Activated CD8-positive, alpha-beta T cell treated with anti-CD3 and anti-CD28 coated beads for 36 hours (primary cell): ENCODE measurements at regions of chr2 and their contacts with region 1.

Region 1: DNA sequence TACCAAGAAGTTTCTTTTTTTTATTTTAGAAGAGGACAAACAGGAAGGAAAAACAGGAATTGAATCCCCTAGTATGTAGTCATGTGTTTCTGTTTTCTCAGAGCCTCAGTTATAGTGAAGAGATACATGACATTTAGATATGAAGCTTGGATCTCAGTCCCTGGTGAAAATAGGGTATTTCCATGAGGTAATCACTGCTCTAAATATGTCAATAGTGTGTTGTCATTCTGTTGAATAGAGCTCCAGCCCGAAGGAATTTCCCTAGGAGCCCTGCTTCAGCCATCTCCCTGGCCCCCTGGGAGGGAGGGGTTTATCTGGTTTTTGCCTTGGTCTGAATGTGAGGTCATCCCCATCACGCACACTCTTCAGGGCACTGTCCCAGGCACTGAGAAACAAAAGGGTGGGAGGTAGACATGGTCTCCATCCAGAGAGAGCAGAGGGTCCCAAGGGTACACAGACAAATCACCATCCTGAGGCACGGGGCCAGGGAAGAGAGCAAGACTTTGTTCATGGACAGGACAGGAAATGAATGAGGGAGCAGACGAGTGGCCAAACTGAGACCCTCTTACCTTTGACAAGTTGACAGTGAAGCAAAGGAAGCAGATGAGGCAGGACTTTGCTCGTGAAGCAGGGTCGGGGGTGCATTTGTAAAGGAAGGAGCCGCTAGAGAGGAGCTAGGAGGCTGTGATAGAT is 47.0 kb upstream of the REL start:
- DNase-seq: no peak
- ATAC-seq: peak; percentile 27
- H3K4me3 Mint-ChIP-seq: no peak overlapping the region
- H3K27ac Mint-ChIP-seq: peak overlapping the region; percentile 36
- H3K4me1 Mint-ChIP-seq: peaks cover 43% of the 10 kb centered on the region
- H3K27me3 Mint-ChIP-seq: no peaks in the 10 kb centered on the region
- CTCF ChIP-seq: no peak

Region 2: GRCh38 chr2:60581433-60582282 is 252.8 kb before region 1 on chr2:
- CTCF ChIA-PET with region 1: no interaction called
- POLR2A ChIA-PET with region 1: no interaction called
- intact Hi-C with region 1: no loop called
- DNase-seq: peak; percentile 75
- ATAC-seq: peak; percentile 99
- H3K4me3 Mint-ChIP-seq: no peak overlapping the region
- H3K27ac Mint-ChIP-seq: no peak overlapping the region
- H3K4me1 Mint-ChIP-seq: peaks cover 2% of the 10 kb centered on the region
- H3K27me3 Mint-ChIP-seq: peaks cover 29% of the 10 kb centered on the region
- CTCF ChIP-seq: peak; percentile 98

Region 3: GRCh38 chr2:60671966-60672365 is 162.4 kb before region 1 on chr2:
- CTCF ChIA-PET with region 1: no interaction called
- POLR2A ChIA-PET with region 1: no interaction called
- intact Hi-C with region 1: no loop called
- DNase-seq: no peak
- ATAC-seq: no peak
- H3K4me3 Mint-ChIP-seq: no peak overlapping the region
- H3K27ac Mint-ChIP-seq: no peak overlapping the region
- H3K4me1 Mint-ChIP-seq: no peaks in the 10 kb centered on the region
- H3K27me3 Mint-ChIP-seq: no peaks in the 10 kb centered on the region
- CTCF ChIP-seq: no peak

Region 4: GRCh38 chr2:60818272-60818671 is 16.1 kb before region 1 on chr2:
- CTCF ChIA-PET with region 1: interaction called, 10 read pairs
- POLR2A ChIA-PET with region 1: interaction called, 17 read pairs
- intact Hi-C with region 1: no loop called
- DNase-seq: peak; percentile 85
- ATAC-seq: peak; percentile 44
- H3K4me3 Mint-ChIP-seq: peak overlapping the region; percentile 36
- H3K27ac Mint-ChIP-seq: peak overlapping the region; percentile 99
- H3K4me1 Mint-ChIP-seq: peaks cover 50% of the 10 kb centered on the region
- H3K27me3 Mint-ChIP-seq: no peaks in the 10 kb centered on the region
- CTCF ChIP-seq: peak; percentile 42

Region 5: GRCh38 chr2:60873381-60873780 is 39.0 kb after region 1 on chr2:
- CTCF ChIA-PET with region 1: interaction called, 4 read pairs
- POLR2A ChIA-PET with region 1: no interaction called
- intact Hi-C with region 1: loop called (anchors 5 kb)
- DNase-seq: no peak
- ATAC-seq: peak; percentile 35
- H3K4me3 Mint-ChIP-seq: no peak overlapping the region
- H3K27ac Mint-ChIP-seq: peak overlapping the region; percentile 78
- H3K4me1 Mint-ChIP-seq: peaks cover 29% of the 10 kb centered on the region
- H3K27me3 Mint-ChIP-seq: no peaks in the 10 kb centered on the region
- CTCF ChIP-seq: no peak